ENCODE measurements at regions of chr12 and their contacts with region 1.

Region 1: DNA sequence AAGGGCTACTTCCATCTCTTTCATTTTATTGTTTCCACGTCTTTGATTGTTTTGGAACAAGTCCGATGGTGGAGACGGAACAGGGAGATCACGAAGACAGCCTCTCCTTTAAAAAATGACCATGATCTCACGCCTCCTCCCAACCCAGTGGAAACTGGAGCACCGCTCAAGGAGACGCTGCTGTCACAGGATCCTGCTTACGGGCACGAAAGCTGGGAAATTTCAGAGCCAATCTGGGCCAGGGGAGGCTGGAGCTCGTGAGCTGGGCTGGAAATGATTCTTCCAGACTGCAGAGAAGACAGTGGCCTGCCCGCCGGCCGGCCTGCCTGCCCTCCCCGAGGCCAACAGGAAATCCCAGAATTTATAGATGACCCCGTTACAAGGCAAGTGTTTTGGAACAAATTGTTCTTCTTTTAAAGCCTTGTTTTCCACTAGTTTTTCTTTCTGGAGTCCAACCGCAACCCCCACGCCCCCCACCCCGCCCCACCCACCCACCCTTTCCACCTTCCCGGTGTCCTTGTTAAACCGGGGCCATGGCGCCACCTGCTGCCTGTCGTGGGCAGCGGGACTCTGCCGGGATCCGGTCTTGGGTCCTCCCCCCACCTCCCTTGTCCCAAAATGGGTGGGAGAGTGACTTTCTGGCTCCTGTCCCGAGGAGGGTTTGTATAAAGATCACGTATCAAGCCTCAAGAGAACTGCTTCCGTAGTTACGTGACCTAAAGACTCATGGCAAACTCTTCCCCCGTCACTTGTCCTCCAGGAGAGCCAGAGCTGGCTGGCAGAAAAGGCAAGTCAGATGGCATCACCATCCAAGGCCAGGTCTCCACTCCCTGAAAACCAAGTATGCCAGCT is 40.3 kb downstream of the MAP1LC3B2 start:
- DNase-seq: peak; percentile 83 to 87 (median 85)
- ATAC-seq: peak; percentile 89
- H3K4me3 ChIP-seq: no peak overlapping the region
- H3K4me1 ChIP-seq: peaks cover 10% of the 10 kb centered on the region
- CTCF ChIP-seq: peak; percentile 33

Region 2: GRCh38 chr12:115885038-115885690 is 714.3 kb before region 1 on chr12:
- intact Hi-C with region 1: no loop called
- DNase-seq: no peak
- ATAC-seq: no peak
- H3K4me3 ChIP-seq: no peak overlapping the region
- H3K4me1 ChIP-seq: no peaks in the 10 kb centered on the region
- CTCF ChIP-seq: no peak

Region 3: GRCh38 chr12:115998119-115998633 is 601.3 kb before region 1 on chr12:
- intact Hi-C with region 1: loop called in 1 of 2 experiments (anchors 5 kb)
- DNase-seq: peak in 1 of 3 donors; percentile 21
- ATAC-seq: peak; percentile 68
- H3K4me3 ChIP-seq: no peak overlapping the region
- H3K4me1 ChIP-seq: no peaks in the 10 kb centered on the region
- CTCF ChIP-seq: peak; percentile 56

Region 4: DNA sequence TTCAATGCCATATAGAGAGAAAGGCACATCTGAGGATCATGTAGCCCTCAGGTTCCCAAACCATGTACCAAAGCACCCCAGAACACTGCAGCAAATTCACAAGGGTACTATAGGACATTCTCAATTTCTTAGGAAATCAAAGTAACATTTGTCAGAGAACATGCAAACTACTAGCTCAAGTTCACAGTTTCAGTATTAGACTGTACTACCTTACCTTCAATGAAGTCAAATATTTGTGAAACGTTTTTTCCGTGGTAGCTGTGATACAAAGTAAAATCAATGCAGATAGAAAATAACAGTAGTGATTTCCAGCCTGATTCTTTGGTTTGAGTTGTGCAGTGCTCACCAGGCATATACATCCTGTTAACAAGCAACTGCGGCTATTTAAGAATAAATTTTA is 519.1 kb before region 1 on chr12:
- intact Hi-C with region 1: no loop called
- DNase-seq: no peak
- ATAC-seq: no peak
- H3K4me3 ChIP-seq: no peak overlapping the region
- H3K4me1 ChIP-seq: no peaks in the 10 kb centered on the region
- CTCF ChIP-seq: no peak

Region 5: GRCh38 chr12:116277393-116278278 is 321.9 kb before region 1 on chr12 and contains the start of gene MED13L:
- intact Hi-C with region 1: loop called in 1 of 2 experiments (anchors 10 kb)
- DNase-seq: peak; percentile 87 to 95 (median 90)
- ATAC-seq: peak; percentile 88
- H3K4me3 ChIP-seq: peak within 1 kb of the TSS; percentile 75
- H3K4me1 ChIP-seq: peaks cover 21% of the 10 kb centered on the region
- CTCF ChIP-seq: peak; percentile 33
- total RNA-seq, gene MED13L: 96.9 to 165 (median 135) TPM

Region 6: DNA sequence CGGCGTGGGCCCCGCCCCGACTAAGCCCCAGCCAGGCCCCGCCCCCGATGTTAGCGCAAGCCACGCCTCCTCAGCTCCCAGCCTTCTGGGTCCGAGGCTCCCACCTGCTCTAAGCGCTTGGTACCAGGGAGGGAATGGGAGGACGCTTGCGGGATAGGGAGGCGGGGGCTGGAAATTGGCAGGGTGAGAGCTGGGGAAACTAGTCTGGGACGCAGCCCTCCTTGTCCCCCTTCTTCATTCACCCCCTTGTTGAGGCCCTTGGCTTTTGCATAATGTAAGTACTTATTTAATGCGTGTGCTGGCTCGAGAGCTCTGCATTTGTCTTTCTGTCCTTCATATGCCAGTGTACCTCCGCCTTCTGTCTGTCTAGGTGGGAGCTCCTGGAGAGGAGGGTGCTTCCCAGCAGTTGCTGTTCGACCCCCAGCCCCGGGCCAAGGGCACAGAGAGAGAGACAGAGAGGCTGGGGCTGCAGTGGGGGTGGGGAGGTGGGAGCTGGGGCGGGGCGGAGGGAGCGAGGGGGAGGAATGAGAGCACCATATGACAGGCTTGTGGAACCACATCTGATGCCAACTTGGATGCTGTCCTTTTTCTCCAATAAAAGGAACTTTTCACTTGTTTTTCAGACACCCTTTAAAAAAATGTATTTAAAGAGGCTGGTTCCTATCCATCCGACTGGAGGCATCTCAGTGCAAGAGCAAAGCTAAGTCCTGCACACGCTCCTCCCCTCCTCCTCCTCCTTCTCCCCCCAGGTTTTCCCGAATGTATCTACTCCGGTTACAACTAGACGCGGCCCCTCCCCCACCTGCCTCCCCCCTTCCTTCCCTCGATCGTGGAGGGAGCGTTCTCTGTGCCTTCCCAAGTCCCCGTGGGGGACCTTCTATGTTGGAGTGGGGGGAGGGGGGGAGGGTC is 65.9 kb before region 1 on chr12:
- intact Hi-C with region 1: loop called in 1 of 2 experiments (anchors 10 kb)
- DNase-seq: peak; percentile 85 to 87 (median 87)
- ATAC-seq: peak; percentile 94
- H3K4me3 ChIP-seq: no peak overlapping the region
- H3K4me1 ChIP-seq: peaks cover 9% of the 10 kb centered on the region
- CTCF ChIP-seq: no peak

Region 7: DNA sequence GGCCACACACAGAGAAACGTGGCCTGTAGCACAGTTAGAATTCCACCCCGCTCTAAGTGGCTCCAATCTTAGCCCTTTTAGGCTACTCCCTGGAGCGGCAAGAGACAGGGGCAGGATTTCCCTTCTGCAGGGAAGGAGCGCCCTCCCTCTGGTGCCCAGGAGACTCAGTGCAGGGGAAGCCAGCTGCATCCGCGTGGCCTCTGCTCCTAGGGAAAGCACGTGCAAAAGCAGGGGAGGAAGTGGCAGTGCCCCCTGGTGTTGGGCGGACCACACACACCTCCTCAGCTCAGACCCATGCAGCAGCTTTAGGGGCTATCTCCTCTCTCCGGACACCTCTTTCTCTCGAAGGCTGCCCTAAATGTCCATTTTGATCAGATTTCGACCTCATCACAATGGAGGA is 88.4 kb after region 1 on chr12:
- intact Hi-C with region 1: no loop called
- DNase-seq: peak in 2 of 3 donors; percentile 26 to 41
- ATAC-seq: peak; percentile 67
- H3K4me3 ChIP-seq: no peak overlapping the region
- H3K4me1 ChIP-seq: no peaks in the 10 kb centered on the region
- CTCF ChIP-seq: no peak

Region 8: DNA sequence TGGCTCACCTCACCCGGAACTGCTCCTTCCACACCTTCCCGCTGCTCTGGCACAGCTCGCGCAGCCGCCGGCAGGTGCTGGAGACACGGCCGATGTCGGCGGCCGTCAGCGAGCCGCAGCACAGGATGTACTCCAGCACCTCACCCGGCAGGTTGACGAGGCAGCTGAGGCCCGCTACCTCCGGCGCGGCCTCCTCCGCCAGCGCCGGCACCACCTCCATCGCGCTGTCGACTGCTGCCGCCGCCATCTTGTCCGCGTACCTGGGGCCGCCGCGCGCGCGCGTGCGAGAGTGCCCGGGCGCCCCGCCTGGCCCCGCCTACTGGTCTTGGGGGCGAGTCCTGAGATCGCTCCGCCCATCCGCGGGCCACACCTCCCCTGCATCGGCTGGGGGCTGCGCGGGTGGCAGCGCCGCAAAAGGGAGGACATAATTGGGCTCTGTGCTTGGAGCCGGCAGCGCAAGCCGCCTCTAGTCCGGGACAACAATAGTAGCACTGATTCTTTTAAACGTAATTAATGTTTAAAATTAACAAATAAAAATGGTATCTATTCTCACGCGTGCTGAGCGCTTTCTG is 590.8 kb after region 1 on chr12 and contains the start of gene FBXO21:
- intact Hi-C with region 1: no loop called
- DNase-seq: peak; percentile 92 to 95 (median 92)
- ATAC-seq: peak; percentile 100
- H3K4me3 ChIP-seq: peak within 1 kb of the TSS; percentile 79
- H3K4me1 ChIP-seq: no peaks in the 10 kb centered on the region
- CTCF ChIP-seq: no peak
- total RNA-seq, gene FBXO21: 14.7 to 44.6 (median 30.7) TPM

Measured in mucosa of descending colon (tissue), 3 donors.